Tibial artery (tissue), 4 donors: ENCODE measurements at regions of chr3 and their contacts with region 1.

Region 1: GRCh38 chr3:58568572-58569286 is 8.5 kb downstream of the FAM107A start:
- DNase-seq: peak; percentile 70 to 86
- H3K4me3 ChIP-seq: no peak overlapping the region
- H3K27ac ChIP-seq: no peak overlapping the region
- H3K4me1 ChIP-seq: no peaks in the 10 kb centered on the region
- H3K27me3 ChIP-seq: no peaks in the 10 kb centered on the region
- CTCF ChIP-seq: peak; percentile 84 to 95

Region 2: DNA sequence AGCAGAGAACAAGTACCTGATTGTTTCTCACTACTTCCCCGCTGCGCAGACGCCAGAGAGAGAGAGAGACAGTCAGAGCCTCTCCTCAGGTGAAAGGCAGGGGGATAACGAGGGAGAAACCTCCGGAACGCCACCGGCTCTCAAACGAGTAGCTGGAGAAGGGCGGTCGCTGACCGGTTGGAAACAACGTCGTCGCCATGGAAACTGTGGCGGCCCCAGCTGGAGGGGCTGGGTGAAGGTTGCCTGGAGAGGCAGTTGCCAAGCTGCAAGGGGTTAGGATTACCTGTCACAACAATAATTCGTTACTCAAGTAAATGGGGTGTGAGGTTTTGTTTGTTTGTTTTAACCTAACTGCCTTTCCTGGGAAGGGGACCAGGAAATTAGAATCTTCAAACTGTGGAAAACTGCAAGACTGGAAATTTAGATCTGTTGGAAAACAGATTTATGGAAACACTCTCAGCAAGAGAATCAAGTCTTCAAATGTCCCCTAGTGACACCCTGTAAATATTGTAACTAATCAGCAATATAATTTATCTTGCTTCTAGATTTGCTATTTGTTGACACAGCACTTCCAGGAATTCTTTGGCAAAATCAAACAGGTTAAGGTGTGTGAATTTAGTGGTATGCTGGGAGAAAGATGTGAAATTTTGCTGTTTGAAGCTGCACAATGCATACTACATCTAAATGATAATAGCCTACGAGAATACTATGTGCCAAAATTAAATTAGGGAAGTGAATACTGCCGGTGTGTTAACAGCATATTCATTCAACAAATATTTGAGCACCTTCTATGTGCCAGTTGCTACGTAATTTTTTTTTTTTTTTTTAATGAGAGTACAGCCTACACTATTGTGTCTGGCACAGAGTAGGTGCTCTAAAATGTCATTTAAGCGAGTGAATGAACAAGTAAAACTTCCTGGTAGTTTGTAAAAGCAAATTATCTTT is 1024.3 kb before region 1 on chr3 and contains the start of gene DNAH12:
- intact Hi-C with region 1: no loop called
- DNase-seq: no peak
- H3K4me3 ChIP-seq: peak within 1 kb of the TSS in 1 of 2 donors; percentile 16
- H3K27ac ChIP-seq: no peak within 1 kb of the TSS
- H3K4me1 ChIP-seq: peaks cover 0 to 14% (median 2%) of the 10 kb centered on the region in 4 donors
- H3K27me3 ChIP-seq: peaks cover 0 to 4% of the 10 kb centered on the region in 2 donors
- CTCF ChIP-seq: no peak

Region 3: GRCh38 chr3:58628823-58629562 is 60.3 kb after region 1 on chr3:
- intact Hi-C with region 1: loop called (anchors 2 kb)
- DNase-seq: peak in 1 of 2 donors; percentile 61
- H3K4me3 ChIP-seq: no peak overlapping the region
- H3K27ac ChIP-seq: peak overlapping the region in 1 of 2 donors; percentile 15
- H3K4me1 ChIP-seq: peaks cover 0 to 41% (median 16%) of the 10 kb centered on the region in 4 donors
- H3K27me3 ChIP-seq: peaks cover 0 to 16% of the 10 kb centered on the region in 2 donors
- CTCF ChIP-seq: no peak